ENCODE measurements at regions of chr10 and their contacts with region 1.

Region 1: GRCh38 chr10:128078136-128078969 is 47.9 kb downstream of the MKI67 start:
- DNase-seq: peak in 1 of 2 experiments; percentile 79
- H3K4me3 ChIP-seq: no peak overlapping the region
- H3K4me3 Mint-ChIP-seq: no peak overlapping the region
- H3K27ac Mint-ChIP-seq: no peak overlapping the region
- H3K4me1 ChIP-seq: no peaks in the 10 kb centered on the region
- H3K4me1 Mint-ChIP-seq: no peaks in the 10 kb centered on the region
- H3K27me3 ChIP-seq: no peaks in the 10 kb centered on the region
- H3K27me3 Mint-ChIP-seq: peaks cover 13% of the 10 kb centered on the region
- CTCF ChIP-seq: peak; percentile 78 to 94

Region 2: GRCh38 chr10:128095027-128095752 is 16.8 kb after region 1 on chr10:
- CTCF ChIA-PET with region 1: interaction called, 6 read pairs
- POLR2A ChIA-PET with region 1: no interaction called
- intact Hi-C with region 1: loop called (anchors 1 kb)
- DNase-seq: peak; percentile 62 to 66
- H3K4me3 ChIP-seq: no peak overlapping the region
- H3K4me3 Mint-ChIP-seq: no peak overlapping the region
- H3K27ac Mint-ChIP-seq: no peak overlapping the region
- H3K4me1 ChIP-seq: peaks cover 12% of the 10 kb centered on the region
- H3K4me1 Mint-ChIP-seq: peaks cover 28% of the 10 kb centered on the region
- H3K27me3 ChIP-seq: no peaks in the 10 kb centered on the region
- H3K27me3 Mint-ChIP-seq: no peaks in the 10 kb centered on the region
- CTCF ChIP-seq: peak in 1 of 2 experiments; percentile 11

Region 3: DNA sequence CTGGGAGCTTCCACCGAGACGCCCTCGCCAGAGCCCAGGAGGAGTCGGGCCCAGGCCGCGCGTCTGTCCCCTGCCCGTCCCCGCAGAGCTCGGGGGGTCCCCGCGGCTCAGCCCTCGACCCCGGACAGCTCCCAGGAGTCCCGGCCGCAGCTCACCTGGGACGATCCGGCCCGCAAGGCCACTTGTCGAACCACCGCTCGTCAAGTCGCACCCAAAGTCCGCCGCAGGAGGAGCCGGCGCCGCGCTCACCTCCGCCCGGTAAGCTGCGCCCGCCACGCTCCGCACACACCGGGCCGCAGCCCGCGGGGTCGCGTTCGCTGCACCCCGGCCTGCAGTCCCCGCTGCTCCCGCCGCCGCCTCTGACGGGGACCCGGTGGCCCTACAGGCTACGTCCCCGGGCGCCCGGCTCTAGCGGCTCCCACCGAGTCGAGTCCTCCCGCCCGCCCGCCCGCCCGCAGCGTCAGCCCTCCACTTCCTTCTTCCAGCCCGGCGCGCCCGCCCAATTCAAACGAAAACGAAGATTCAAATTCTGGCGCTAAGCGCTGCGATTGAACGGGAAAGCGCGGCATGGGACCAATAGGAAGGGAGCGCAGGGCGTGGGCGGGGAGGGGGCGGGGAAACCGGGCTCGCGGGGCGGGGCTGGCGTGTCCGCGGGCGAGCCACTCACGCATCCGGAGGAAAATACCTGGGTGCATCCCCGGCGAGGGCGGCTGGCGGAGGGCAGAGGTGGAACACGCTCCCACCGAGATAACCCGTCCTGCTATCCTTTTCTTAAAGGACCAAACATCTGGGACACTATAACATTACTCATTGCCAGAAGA is 47.8 kb after region 1 on chr10 and contains the start of gene MKI67:
- CTCF ChIA-PET with region 1: no interaction called
- POLR2A ChIA-PET with region 1: no interaction called
- intact Hi-C with region 1: loop called (anchors 1 kb)
- DNase-seq: peak; percentile 91 to 92
- H3K4me3 ChIP-seq: peak within 1 kb of the TSS; percentile 98
- H3K4me3 Mint-ChIP-seq: peak within 1 kb of the TSS; percentile 86
- H3K27ac Mint-ChIP-seq: peak within 1 kb of the TSS; percentile 77
- H3K4me1 ChIP-seq: peaks cover 26% of the 10 kb centered on the region
- H3K4me1 Mint-ChIP-seq: peaks cover 9% of the 10 kb centered on the region
- H3K27me3 ChIP-seq: no peaks in the 10 kb centered on the region
- H3K27me3 Mint-ChIP-seq: no peaks in the 10 kb centered on the region
- CTCF ChIP-seq: no peak
- total RNA-seq, gene MKI67: 111 and 128 TPM in 2 replicates

Region 4: DNA sequence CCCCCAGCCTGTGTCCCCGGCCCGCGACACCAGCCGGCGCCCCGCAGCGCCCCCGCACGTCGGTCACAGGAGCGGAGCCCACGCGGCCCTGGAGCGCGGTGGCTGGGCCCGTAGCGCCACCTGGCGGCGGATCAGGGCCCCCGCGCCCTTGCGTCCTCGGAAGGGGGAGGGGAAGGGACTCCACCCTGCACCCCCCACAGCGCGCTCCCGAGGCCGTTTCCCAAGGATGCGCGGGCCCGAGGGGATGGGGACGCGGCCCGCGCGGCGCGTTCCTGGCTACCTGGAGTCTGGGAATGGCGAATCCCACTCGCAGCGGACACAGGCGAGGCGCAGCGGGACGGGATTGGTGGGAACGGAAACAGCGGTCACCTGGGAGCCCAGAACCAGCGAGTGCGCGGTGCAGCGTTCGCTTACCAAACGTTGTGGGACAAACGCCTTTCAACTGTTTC is 71.7 kb after region 1 on chr10:
- CTCF ChIA-PET with region 1: interaction called, 16 read pairs
- POLR2A ChIA-PET with region 1: no interaction called
- intact Hi-C with region 1: loop called (anchors 1 kb)
- DNase-seq: peak; percentile 67 to 84
- H3K4me3 ChIP-seq: peak overlapping the region; percentile 53
- H3K4me3 Mint-ChIP-seq: peak overlapping the region; percentile 70
- H3K27ac Mint-ChIP-seq: no peak overlapping the region
- H3K4me1 ChIP-seq: no peaks in the 10 kb centered on the region
- H3K4me1 Mint-ChIP-seq: no peaks in the 10 kb centered on the region
- H3K27me3 ChIP-seq: no peaks in the 10 kb centered on the region
- H3K27me3 Mint-ChIP-seq: peaks cover 3% of the 10 kb centered on the region
- CTCF ChIP-seq: peak; percentile 83 to 91

Region 5: GRCh38 chr10:128211953-128212727 is 133.8 kb after region 1 on chr10:
- CTCF ChIA-PET with region 1: interaction called, 3 read pairs
- POLR2A ChIA-PET with region 1: no interaction called
- intact Hi-C with region 1: loop called (anchors 2 kb)
- DNase-seq: peak; percentile 78 to 89
- H3K4me3 ChIP-seq: peak overlapping the region; percentile 9; the same call in 1 of the 2 replicates
- H3K4me3 Mint-ChIP-seq: peak overlapping the region; percentile 58
- H3K27ac Mint-ChIP-seq: no peak overlapping the region
- H3K4me1 ChIP-seq: no peaks in the 10 kb centered on the region
- H3K4me1 Mint-ChIP-seq: no peaks in the 10 kb centered on the region
- H3K27me3 ChIP-seq: no peaks in the 10 kb centered on the region; the same call in none of the 2 replicates
- H3K27me3 Mint-ChIP-seq: peaks cover 25% of the 10 kb centered on the region
- CTCF ChIP-seq: peak; percentile 91 to 95